ENCODE measurements at regions of chr11 and their contacts with region 1.

Region 1: DNA sequence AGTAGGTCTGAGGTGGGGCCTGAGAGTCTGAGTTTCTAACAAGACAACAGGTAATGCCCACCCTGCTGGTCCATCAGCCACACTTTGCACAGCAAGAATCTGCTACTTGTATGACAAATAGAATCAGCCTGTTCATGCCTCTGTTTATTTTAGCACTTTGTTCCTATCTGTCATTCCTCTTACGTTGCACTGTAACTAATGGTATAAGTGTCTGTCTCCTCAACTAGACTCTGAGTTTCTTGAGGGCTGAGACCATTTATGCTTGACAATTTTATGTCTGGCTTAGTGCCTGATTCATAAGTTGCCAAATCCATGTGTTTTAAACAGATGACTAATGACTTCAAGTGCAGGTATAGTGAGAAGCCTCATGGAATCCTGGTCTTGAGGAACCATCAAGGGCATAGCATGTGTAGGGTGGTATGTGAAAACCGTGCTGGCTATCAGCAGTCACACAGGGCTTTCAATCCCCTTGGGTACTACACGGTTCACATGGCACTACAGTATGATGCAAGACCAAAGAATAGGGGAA is 209.7 kb downstream of the C11orf91 start:
- DNase-seq: no peak
- ATAC-seq: no peak
- H3K4me3 ChIP-seq: no peak overlapping the region
- H3K27ac ChIP-seq: no peak overlapping the region
- H3K4me1 ChIP-seq: no peaks in the 10 kb centered on the region
- H3K27me3 ChIP-seq: no peaks in the 10 kb centered on the region
- CTCF ChIP-seq: no peak

Region 2: GRCh38 chr11:33478111-33478573 is 12.8 kb before region 1 on chr11:
- CTCF ChIA-PET with region 1: no interaction called
- POLR2A ChIA-PET with region 1: interaction called, 12 read pairs
- in situ Hi-C with region 1: no loop called
- intact Hi-C with region 1: no loop called
- DNase-seq: no peak
- ATAC-seq: no peak
- H3K4me3 ChIP-seq: no peak overlapping the region
- H3K27ac ChIP-seq: no peak overlapping the region
- H3K4me1 ChIP-seq: peaks cover 7% of the 10 kb centered on the region; the same call in 1 of the 2 replicates
- H3K27me3 ChIP-seq: no peaks in the 10 kb centered on the region
- CTCF ChIP-seq: no peak

Region 3: DNA sequence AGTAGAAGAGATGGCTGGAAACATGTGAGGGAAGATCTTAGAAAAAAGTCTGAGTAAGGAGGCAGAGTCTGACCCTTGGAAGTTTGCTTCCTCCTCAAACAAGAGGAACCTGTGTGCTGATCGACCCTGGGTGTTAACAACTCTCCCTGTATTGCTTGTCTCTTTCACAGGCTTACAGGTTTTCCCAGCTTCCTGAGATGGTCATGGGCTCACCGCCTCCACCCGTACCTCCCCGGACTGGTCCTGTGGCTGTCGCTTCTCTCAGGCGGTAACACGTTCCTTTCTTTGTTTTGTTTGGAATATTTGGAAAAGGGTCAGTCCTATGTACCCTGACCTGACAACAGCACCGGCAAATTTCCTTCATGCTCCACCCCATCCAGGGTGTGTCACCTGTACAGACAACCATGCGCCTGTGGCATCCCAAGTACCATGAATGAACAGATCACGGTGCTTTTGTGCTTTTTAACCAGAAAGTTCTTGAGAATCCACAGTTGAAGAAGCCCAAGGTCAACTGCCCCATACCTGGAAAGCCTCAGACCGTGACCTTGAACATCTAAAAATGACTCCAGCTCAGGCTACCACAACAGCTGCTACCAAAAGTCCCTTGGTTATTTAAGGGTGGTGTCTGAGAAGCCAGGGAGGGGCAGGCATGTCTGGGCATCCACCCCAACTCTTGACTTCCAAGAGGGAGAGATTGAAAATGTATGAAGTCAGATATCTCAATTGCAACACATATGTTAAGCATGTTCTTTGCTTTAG is 165.1 kb after region 1 on chr11:
- CTCF ChIA-PET with region 1: no interaction called
- POLR2A ChIA-PET with region 1: no interaction called
- in situ Hi-C with region 1: no loop called
- intact Hi-C with region 1: no loop called
- DNase-seq: no peak
- ATAC-seq: no peak
- H3K4me3 ChIP-seq: no peak overlapping the region
- H3K27ac ChIP-seq: no peak overlapping the region
- H3K4me1 ChIP-seq: no peaks in the 10 kb centered on the region
- H3K27me3 ChIP-seq: no peaks in the 10 kb centered on the region
- CTCF ChIP-seq: no peak

Region 4: DNA sequence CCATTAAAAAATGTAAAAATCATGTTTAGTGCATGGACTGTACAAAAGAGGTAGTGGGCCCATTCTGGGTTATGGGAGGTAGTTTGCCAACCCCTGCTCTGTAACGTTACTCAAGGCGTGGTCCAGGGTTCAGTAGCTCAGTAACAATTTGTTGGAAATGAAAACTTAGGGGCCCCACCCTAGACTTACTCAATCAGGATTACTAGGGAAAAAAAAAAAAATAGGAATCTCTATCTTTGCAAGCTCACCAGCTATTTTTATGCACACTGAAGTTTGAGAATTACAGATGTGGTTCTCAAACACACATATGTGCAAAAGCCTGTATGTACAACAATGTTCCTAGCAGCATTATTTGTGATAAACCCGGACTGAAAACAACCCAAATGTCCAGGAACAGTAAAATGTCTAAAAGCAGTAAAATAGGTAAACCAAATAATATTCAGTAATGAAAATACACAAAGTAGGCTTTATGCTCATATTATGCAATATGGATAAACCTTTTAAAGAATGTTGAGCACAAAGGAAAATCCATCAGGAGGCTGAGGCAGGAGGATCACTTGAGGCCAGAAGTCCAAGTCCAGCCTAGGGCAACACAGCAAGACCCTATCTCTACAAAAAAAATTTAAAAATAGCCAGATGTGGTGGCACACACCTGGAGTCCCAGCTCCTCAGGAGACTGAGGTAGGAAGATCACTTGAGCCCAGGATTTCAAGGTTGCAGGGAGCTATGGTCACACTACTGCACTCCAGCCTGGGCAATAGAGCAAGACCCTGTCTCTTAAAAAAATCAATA is 418.4 kb after region 1 on chr11:
- CTCF ChIA-PET with region 1: no interaction called
- POLR2A ChIA-PET with region 1: interaction called, 10 read pairs
- in situ Hi-C with region 1: no loop called
- intact Hi-C with region 1: no loop called
- DNase-seq: no peak
- ATAC-seq: no peak
- H3K4me3 ChIP-seq: no peak overlapping the region
- H3K27ac ChIP-seq: no peak overlapping the region
- H3K4me1 ChIP-seq: no peaks in the 10 kb centered on the region
- H3K27me3 ChIP-seq: peaks cover 4% of the 10 kb centered on the region; the same call in 1 of the 2 replicates
- CTCF ChIP-seq: no peak

Measured in Panc1 (cell line).